Right lobe of liver (tissue), 6 donors: ENCODE measurements at regions of chr2 and their contacts with region 1.

Region 1: GRCh38 chr2:130873700-130874346 is 37.1 kb downstream of the ARHGEF4 start:
- DNase-seq: peak in 2 of 3 donors; percentile 61 to 68
- ATAC-seq: peak; percentile 83 to 96 (median 88)
- H3K4me3 ChIP-seq: no peak overlapping the region
- H3K27ac ChIP-seq: no peak overlapping the region
- H3K4me1 ChIP-seq: no peaks in the 10 kb centered on the region
- H3K27me3 ChIP-seq: no peaks in the 10 kb centered on the region
- CTCF ChIP-seq: peak; percentile 62 to 66 (median 62)
- POLR2A ChIP-seq: no peak

Region 2: GRCh38 chr2:130797493-130798435 is 76.1 kb before region 1 on chr2:
- intact Hi-C with region 1: loop called (anchors 5 kb)
- DNase-seq: peak; percentile 91 to 94 (median 92)
- ATAC-seq: peak; percentile 96 to 99 (median 98)
- H3K4me3 ChIP-seq: peak overlapping the region; percentile 69 to 87 (median 74)
- H3K27ac ChIP-seq: peak overlapping the region; percentile 62 to 72 (median 66)
- H3K4me1 ChIP-seq: peaks cover 0 to 3% (median 1%) of the 10 kb centered on the region in 4 donors
- H3K27me3 ChIP-seq: no peaks in the 10 kb centered on the region
- CTCF ChIP-seq: peak; percentile 72 to 90 (median 86)
- POLR2A ChIP-seq: no peak